HCT116 (cell line): ENCODE measurements at regions of chr17 and their contacts with region 1.

Region 1: DNA sequence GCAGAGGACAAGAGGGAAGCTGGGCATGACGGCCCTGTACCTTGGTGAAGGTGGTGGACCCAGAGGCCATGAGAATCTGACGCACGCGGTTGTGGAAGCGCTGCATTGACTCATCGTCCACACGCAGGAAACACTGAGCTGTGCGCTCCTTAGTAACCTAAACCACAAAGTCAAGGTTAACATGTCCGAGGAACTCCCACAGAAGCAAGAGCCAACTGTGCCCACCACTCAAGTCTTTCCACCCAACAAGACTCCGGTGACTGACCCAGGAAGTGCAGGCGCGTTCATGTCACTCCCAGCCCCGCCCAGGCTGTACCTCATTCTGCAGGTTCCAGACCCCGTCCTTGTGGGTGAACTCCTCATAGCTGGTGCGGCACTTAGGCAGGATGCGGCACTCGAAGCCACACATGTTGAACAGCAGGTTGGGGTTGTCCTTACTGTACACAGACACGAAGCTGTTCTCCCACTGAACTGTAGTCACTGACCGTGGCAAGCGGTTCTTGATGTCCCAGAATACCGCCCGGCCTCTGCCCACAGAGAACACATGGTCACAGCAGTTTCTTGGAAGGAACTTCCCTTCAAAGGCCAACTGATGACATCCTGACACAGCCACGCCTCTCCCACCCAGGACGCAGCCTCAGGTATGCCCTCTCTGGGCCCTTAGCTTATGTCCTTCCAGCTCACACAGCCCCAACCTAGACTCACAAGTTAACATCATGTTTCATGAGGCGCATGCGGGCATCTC is 11.5 kb downstream of the PRPF8 start:
- DNase-seq: no peak
- ATAC-seq: no peak
- H3K4me3 ChIP-seq: no peak overlapping the region
- H3K27ac ChIP-seq: no peak overlapping the region
- H3K4me1 ChIP-seq: peaks cover 0 to 3% of the 10 kb centered on the region in 2 experiments; a peak in 1 of 4 replicates
- H3K27me3 ChIP-seq: no peaks in the 10 kb centered on the region
- CTCF ChIP-seq: no peak
- POLR2A ChIP-seq: no peak
- RAD21 ChIP-seq: no peak

Region 2: GRCh38 chr17:1724506-1725362 is 51.5 kb after region 1 on chr17 and contains the start of gene WDR81:
- CTCF ChIA-PET with region 1: no interaction called
- POLR2A ChIA-PET with region 1: no interaction called
- RAD21 ChIA-PET with region 1: no interaction called
- intact Hi-C with region 1: no loop called
- DNase-seq: peak; percentile 48
- ATAC-seq: peak; percentile 72
- H3K4me3 ChIP-seq: peak within 1 kb of the TSS; percentile 54 to 66
- H3K27ac ChIP-seq: peak within 1 kb of the TSS; percentile 75
- H3K4me1 ChIP-seq: peaks cover 22 to 47% of the 10 kb centered on the region in 2 experiments; a peak in 3 of 4 replicates
- H3K27me3 ChIP-seq: no peaks in the 10 kb centered on the region
- CTCF ChIP-seq: no peak
- POLR2A ChIP-seq: no peak
- RAD21 ChIP-seq: no peak
- total RNA-seq, gene WDR81: 17.3 TPM

Region 3: DNA sequence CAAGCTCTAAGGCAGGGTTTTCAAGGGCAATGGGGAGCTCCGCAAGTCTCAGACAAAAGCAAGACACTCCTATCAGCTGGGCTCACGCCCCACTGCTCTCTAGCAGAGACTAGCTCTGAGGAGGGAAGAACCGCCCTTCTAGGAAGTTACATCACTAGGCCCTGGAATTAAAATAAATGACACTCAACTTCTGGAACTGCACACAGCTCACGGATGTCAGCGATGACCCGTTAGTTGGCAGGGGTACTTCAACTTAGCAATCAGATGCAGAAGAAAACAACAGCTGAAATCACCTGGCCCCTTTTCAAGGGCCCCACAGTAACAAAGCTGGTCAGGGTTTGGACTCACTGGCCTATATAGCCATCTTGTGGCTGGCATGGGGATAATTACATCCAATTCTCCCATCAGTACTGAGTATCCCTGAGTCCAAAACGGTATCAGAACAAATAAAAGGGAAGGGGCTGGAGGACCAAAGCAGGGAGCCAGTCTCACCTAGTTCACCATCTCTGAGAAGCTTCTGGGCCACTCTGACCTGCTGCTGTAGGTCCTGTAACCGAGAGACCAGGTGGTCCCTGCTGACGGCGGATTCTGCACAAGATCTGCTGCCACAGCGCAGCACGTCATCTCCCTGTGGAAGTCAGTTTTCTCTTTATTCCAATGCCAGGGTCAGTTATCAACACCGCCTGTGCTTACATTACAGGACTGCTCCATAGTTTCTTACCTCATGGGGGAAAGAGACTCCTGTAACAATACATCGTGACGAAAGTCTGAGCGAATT is 110.8 kb after region 1 on chr17:
- CTCF ChIA-PET with region 1: interaction called, 10 read pairs
- POLR2A ChIA-PET with region 1: no interaction called
- RAD21 ChIA-PET with region 1: no interaction called
- intact Hi-C with region 1: loop called (anchors 1 kb)
- DNase-seq: peak; percentile 6
- ATAC-seq: peak; percentile 69
- H3K4me3 ChIP-seq: no peak overlapping the region
- H3K27ac ChIP-seq: 0 out of 2 replicates have a peak overlapping the region, but pooled peaks have one; percentile 4
- H3K4me1 ChIP-seq: peaks cover 10 to 27% of the 10 kb centered on the region in 2 experiments
- H3K27me3 ChIP-seq: no peaks in the 10 kb centered on the region
- CTCF ChIP-seq: peak; percentile 54 to 62 (median 56); a peak in 4 of 6 replicates
- POLR2A ChIP-seq: no peak
- RAD21 ChIP-seq: peak; percentile 72